Testis (tissue), 5 donors: ENCODE measurements at regions of chr19 and their contacts with region 1.

Region 1: GRCh38 chr19:45439569-45440254 is 16.0 kb upstream of the ERCC1 start:
- DNase-seq: peak; percentile 90
- H3K4me3 ChIP-seq: peak overlapping the region; percentile 66 to 81
- H3K27ac ChIP-seq: peak overlapping the region; percentile 93 to 97
- H3K4me1 ChIP-seq: peaks cover 16% of the 10 kb centered on the region
- H3K27me3 ChIP-seq: no peaks in the 10 kb centered on the region
- CTCF ChIP-seq: peak; percentile 98 to 100 (median 100)
- POLR2A ChIP-seq: no peak

Region 2: GRCh38 chr19:45200568-45200994 is 239.1 kb before region 1 on chr19:
- intact Hi-C with region 1: no loop called
- DNase-seq: peak; percentile 73
- H3K4me3 ChIP-seq: no peak overlapping the region
- H3K27ac ChIP-seq: no peak overlapping the region
- H3K4me1 ChIP-seq: no peaks in the 10 kb centered on the region
- H3K27me3 ChIP-seq: no peaks in the 10 kb centered on the region
- CTCF ChIP-seq: peak in 1 of 3 experiments; percentile 38
- POLR2A ChIP-seq: no peak

Region 3: GRCh38 chr19:45478454-45479238 is 38.9 kb after region 1 on chr19:
- intact Hi-C with region 1: loop called (anchors 2 kb)
- DNase-seq: peak; percentile 91
- H3K4me3 ChIP-seq: peak overlapping the region; percentile 59 to 60
- H3K27ac ChIP-seq: peak overlapping the region; percentile 91 to 99
- H3K4me1 ChIP-seq: no peaks in the 10 kb centered on the region
- H3K27me3 ChIP-seq: no peaks in the 10 kb centered on the region
- CTCF ChIP-seq: peak; percentile 95 to 98 (median 97)
- POLR2A ChIP-seq: no peak

Region 4: GRCh38 chr19:45496349-45496953 is 56.7 kb after region 1 on chr19:
- intact Hi-C with region 1: no loop called
- DNase-seq: no peak
- H3K4me3 ChIP-seq: peak overlapping the region; percentile 53 to 56
- H3K27ac ChIP-seq: no peak overlapping the region
- H3K4me1 ChIP-seq: peaks cover 6% of the 10 kb centered on the region
- H3K27me3 ChIP-seq: no peaks in the 10 kb centered on the region
- CTCF ChIP-seq: no peak
- POLR2A ChIP-seq: no peak